KBM-7 (cell line): ENCODE measurements at regions of chr7 and their contacts with region 1.

Region 1: DNA sequence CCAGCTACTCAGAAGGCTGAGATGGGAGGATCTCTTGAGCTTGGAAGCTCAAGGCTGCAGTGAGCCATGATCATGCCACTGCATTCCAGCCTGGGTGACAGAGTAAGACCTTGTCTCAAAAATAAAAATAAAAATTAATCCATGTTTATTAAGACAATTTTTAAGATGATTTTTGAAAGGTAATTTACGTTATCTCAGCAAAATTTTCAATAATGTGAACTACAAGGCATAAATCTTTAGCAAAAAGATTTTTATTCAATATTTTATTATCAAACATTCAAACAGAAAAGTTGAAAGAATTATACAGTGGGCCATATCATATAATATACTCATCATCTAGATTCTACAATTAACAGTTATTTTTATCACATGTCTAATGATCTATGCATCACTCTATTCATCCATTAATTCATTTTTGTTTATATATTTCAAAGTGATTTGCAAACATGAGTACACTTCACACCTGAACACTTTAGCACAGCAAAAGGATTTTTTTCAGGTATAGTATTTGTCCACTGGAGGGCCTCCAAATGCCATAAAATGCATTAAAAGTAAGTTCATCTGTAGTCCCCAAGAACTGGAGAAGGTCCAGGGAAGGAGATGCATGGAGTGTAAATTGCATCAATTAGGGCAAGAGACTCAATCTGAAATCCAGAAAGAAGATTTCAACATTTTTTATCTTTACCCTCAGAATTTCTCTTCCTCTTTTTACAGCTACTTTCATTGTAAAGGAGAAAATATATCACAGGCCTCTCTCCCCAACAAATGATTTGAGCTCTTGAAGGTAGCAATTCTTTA is 38.6 kb upstream of the RSBN1L start:
- DNase-seq: peak; percentile 69

Region 2: DNA sequence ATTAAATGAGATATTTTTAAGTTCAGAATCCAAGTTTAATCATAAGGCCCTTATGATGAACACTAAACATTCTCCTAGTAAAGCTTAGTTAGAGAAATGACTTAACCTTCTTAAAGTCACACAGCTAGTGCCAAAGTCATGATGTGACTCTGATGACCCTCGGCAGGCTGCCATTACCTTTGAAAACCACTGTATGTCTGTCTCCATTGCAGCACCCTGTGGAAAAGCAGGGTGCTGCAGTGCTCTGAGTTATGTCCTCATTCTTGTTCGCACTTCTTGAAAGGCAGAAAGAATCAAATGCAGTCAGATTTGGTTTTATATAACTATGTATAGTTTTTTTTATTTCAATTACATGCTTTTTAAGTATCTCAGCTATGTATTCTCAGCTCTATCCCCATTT is 246.0 kb after region 1 on chr7:
- in situ Hi-C with region 1: loop called (anchors 25 kb)
- DNase-seq: peak; percentile 31